CD8-positive, alpha-beta T cell (primary cell): ENCODE measurements at regions of chr17 and their contacts with region 1.

Region 1: GRCh38 chr17:34542700-34543336 is 36.6 kb upstream of the TMEM132E start:
- DNase-seq: peak in 8 of 9 experiments; percentile 16 to 71 (median 59)
- ATAC-seq: no peak
- H3K4me3 ChIP-seq: no peak overlapping the region
- H3K4me3 Mint-ChIP-seq: no peak overlapping the region
- H3K27ac ChIP-seq: no peak overlapping the region
- H3K27ac Mint-ChIP-seq: no peak overlapping the region
- H3K4me1 ChIP-seq: no peaks in the 10 kb centered on the region
- H3K4me1 Mint-ChIP-seq: no peaks in the 10 kb centered on the region
- H3K27me3 ChIP-seq: no peaks in the 10 kb centered on the region
- H3K27me3 Mint-ChIP-seq: peaks cover 32% of the 10 kb centered on the region
- CTCF ChIP-seq: peak; percentile 71

Region 2: DNA sequence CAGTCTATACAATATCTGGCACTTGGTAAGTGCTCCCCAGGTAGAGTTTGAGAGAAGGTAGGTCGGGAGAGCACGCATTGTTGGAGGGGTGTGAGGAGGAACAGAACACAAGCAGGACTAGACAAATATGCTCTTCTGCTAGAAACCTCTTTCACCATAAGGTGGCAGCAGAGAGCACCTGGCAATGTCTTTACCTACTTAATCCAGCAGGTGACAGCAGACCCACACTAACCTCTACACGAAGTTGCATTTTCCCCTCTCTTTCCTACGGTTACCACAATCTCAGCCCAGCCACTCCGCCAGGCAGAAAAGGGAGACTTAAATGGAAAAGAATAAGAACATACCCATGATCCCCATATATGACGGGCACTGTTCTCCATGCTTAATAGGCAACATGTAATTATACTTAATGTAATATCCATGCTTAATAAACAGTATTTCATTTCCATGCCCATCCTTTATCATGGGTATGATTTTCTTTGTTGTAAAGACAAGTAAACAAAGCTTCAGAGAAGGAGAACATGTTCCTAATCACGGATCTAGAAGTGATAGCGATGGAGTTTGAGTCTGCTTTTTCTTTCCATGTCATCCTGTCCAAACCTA is 342.8 kb before region 1 on chr17:
- CTCF ChIA-PET with region 1: no interaction called
- POLR2A ChIA-PET with region 1: no interaction called
- intact Hi-C with region 1: no loop called
- DNase-seq: peak; percentile 47 to 82 (median 65)
- ATAC-seq: peak; percentile 92
- H3K4me3 ChIP-seq: no peak overlapping the region
- H3K4me3 Mint-ChIP-seq: no peak overlapping the region
- H3K27ac ChIP-seq: no peak overlapping the region
- H3K27ac Mint-ChIP-seq: no peak overlapping the region
- H3K4me1 ChIP-seq: no peaks in the 10 kb centered on the region
- H3K4me1 Mint-ChIP-seq: peaks cover 4% of the 10 kb centered on the region
- H3K27me3 ChIP-seq: peaks cover 0 to 2% of the 10 kb centered on the region in 2 experiments
- H3K27me3 Mint-ChIP-seq: peaks cover 25% of the 10 kb centered on the region
- CTCF ChIP-seq: peak; percentile 100

Region 3: GRCh38 chr17:34511265-34511664 is 31.6 kb before region 1 on chr17:
- CTCF ChIA-PET with region 1: no interaction called
- POLR2A ChIA-PET with region 1: no interaction called
- intact Hi-C with region 1: no loop called
- DNase-seq: no peak
- ATAC-seq: no peak
- H3K4me3 ChIP-seq: no peak overlapping the region
- H3K4me3 Mint-ChIP-seq: no peak overlapping the region
- H3K27ac ChIP-seq: no peak overlapping the region
- H3K27ac Mint-ChIP-seq: no peak overlapping the region
- H3K4me1 ChIP-seq: no peaks in the 10 kb centered on the region
- H3K4me1 Mint-ChIP-seq: no peaks in the 10 kb centered on the region
- H3K27me3 ChIP-seq: no peaks in the 10 kb centered on the region
- H3K27me3 Mint-ChIP-seq: peaks cover 24% of the 10 kb centered on the region
- CTCF ChIP-seq: no peak

Region 4: GRCh38 chr17:34553907-34554306 is 11.1 kb after region 1 on chr17:
- CTCF ChIA-PET with region 1: interaction called, 12 read pairs
- POLR2A ChIA-PET with region 1: no interaction called
- intact Hi-C with region 1: no loop called
- DNase-seq: no peak
- ATAC-seq: no peak
- H3K4me3 ChIP-seq: no peak overlapping the region
- H3K4me3 Mint-ChIP-seq: no peak overlapping the region
- H3K27ac ChIP-seq: no peak overlapping the region
- H3K27ac Mint-ChIP-seq: no peak overlapping the region
- H3K4me1 ChIP-seq: no peaks in the 10 kb centered on the region
- H3K4me1 Mint-ChIP-seq: no peaks in the 10 kb centered on the region
- H3K27me3 ChIP-seq: no peaks in the 10 kb centered on the region
- H3K27me3 Mint-ChIP-seq: peaks cover 32% of the 10 kb centered on the region
- CTCF ChIP-seq: no peak